Endothelial cell of umbilical vein (primary cell): ENCODE measurements at regions of chr6 and their contacts with region 1.

Region 1: GRCh38 chr6:94065707-94066337 is 646.5 kb upstream of the EPHA7 start:
- DNase-seq: no peak
- H3K4me3 ChIP-seq: no peak overlapping the region
- H3K27ac ChIP-seq: no peak overlapping the region
- H3K4me1 ChIP-seq: no peaks in the 10 kb centered on the region
- H3K27me3 ChIP-seq: no peaks in the 10 kb centered on the region
- CTCF ChIP-seq: no peak
- POLR2A ChIP-seq: no peak

Region 2: DNA sequence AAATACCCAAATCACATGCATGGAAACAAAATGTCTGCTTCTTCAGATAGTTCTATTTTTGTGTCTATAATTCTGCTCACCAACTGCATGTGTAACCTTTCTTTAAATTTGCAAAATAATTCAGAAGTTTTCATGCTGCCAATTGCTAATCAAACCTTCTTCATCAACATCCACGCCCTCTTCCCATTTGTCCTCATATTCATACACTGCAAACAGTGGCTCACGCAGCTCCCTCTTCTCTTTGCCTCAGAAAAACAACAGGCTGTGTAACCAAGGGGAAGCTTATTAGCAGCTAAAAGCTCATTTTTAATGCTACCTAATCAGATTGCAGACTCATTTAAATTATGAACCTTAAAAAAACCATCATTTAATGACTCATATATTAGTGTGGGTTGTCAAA is 91.5 kb before region 1 on chr6:
- CTCF ChIA-PET with region 1: no interaction called
- POLR2A ChIA-PET with region 1: no interaction called
- dilution Hi-C with region 1: no loop called
- intact Hi-C with region 1: no loop called
- DNase-seq: no peak
- H3K4me3 ChIP-seq: no peak overlapping the region
- H3K27ac ChIP-seq: no peak overlapping the region
- H3K4me1 ChIP-seq: no peaks in the 10 kb centered on the region
- H3K27me3 ChIP-seq: no peaks in the 10 kb centered on the region
- CTCF ChIP-seq: no peak
- POLR2A ChIP-seq: no peak

Region 3: GRCh38 chr6:94099072-94099471 is 33.2 kb after region 1 on chr6:
- CTCF ChIA-PET with region 1: no interaction called
- POLR2A ChIA-PET with region 1: no interaction called
- dilution Hi-C with region 1: no loop called
- intact Hi-C with region 1: no loop called
- DNase-seq: no peak
- H3K4me3 ChIP-seq: no peak overlapping the region
- H3K27ac ChIP-seq: no peak overlapping the region
- H3K4me1 ChIP-seq: no peaks in the 10 kb centered on the region
- H3K27me3 ChIP-seq: no peaks in the 10 kb centered on the region
- CTCF ChIP-seq: no peak
- POLR2A ChIP-seq: no peak

Region 4: GRCh38 chr6:94121091-94121490 is 55.3 kb after region 1 on chr6:
- CTCF ChIA-PET with region 1: no interaction called
- POLR2A ChIA-PET with region 1: no interaction called
- dilution Hi-C with region 1: no loop called
- intact Hi-C with region 1: loop called (anchors 5 kb)
- DNase-seq: no peak
- H3K4me3 ChIP-seq: no peak overlapping the region
- H3K27ac ChIP-seq: no peak overlapping the region
- H3K4me1 ChIP-seq: no peaks in the 10 kb centered on the region
- H3K27me3 ChIP-seq: no peaks in the 10 kb centered on the region
- CTCF ChIP-seq: no peak
- POLR2A ChIP-seq: no peak

Region 5: GRCh38 chr6:94217836-94218235 is 152.0 kb after region 1 on chr6:
- CTCF ChIA-PET with region 1: no interaction called
- POLR2A ChIA-PET with region 1: no interaction called
- dilution Hi-C with region 1: no loop called
- intact Hi-C with region 1: no loop called
- DNase-seq: no peak
- H3K4me3 ChIP-seq: no peak overlapping the region
- H3K27ac ChIP-seq: no peak overlapping the region
- H3K4me1 ChIP-seq: no peaks in the 10 kb centered on the region
- H3K27me3 ChIP-seq: no peaks in the 10 kb centered on the region
- CTCF ChIP-seq: no peak
- POLR2A ChIP-seq: no peak